CD8-positive, alpha-beta T cell (primary cell): ENCODE measurements at regions of chr10 and their contacts with region 1.

Region 1: DNA sequence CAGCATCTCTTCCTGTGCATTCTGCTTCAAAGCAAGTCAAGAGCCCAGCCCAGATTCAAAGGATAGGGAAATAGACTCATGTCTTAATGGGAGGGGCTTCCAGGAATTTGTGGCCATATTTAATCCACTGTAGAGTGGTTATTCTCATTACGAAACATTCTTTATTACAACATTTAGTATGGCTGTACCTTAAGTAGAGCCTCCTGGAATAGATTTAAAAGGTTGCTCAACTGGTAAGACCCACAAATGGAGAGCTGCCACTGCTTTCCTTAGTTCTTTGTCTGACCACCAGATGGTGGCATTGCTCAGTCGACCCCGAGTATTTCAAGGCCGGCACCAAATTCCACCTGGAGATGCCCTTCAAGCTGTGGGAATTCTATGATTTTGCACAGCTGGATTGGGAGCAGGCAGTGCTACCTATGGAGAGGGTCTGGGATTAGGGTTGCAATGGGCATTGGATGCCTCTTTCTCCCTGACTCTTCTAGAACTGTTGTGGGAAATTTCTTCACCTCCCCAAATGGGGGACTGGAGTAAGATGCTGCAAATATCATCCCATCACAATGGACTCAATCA is 102.2 kb downstream of the RBM20 start:
- DNase-seq: peak; percentile 22 to 75 (median 46)
- ATAC-seq: peak; percentile 37
- H3K4me3 ChIP-seq: no peak overlapping the region
- H3K4me3 Mint-ChIP-seq: no peak overlapping the region
- H3K27ac ChIP-seq: no peak overlapping the region
- H3K27ac Mint-ChIP-seq: no peak overlapping the region
- H3K4me1 ChIP-seq: peaks cover 22% of the 10 kb centered on the region
- H3K4me1 Mint-ChIP-seq: peaks cover 52% of the 10 kb centered on the region
- H3K27me3 ChIP-seq: no peaks in the 10 kb centered on the region
- H3K27me3 Mint-ChIP-seq: no peaks in the 10 kb centered on the region
- CTCF ChIP-seq: peak; percentile 89

Region 2: GRCh38 chr10:110671788-110672579 is 74.4 kb before region 1 on chr10:
- CTCF ChIA-PET with region 1: interaction called, 3 read pairs
- POLR2A ChIA-PET with region 1: no interaction called
- intact Hi-C with region 1: loop called in 1 of 2 experiments (anchors 2 kb)
- DNase-seq: peak; percentile 36 to 82 (median 69)
- ATAC-seq: peak; percentile 85
- H3K4me3 ChIP-seq: peak overlapping the region; percentile 66 to 76
- H3K4me3 Mint-ChIP-seq: peak overlapping the region; percentile 91
- H3K27ac ChIP-seq: peak overlapping the region; percentile 55 to 69
- H3K27ac Mint-ChIP-seq: peak overlapping the region; percentile 91
- H3K4me1 ChIP-seq: peaks cover 4% of the 10 kb centered on the region
- H3K4me1 Mint-ChIP-seq: peaks cover 4% of the 10 kb centered on the region
- H3K27me3 ChIP-seq: no peaks in the 10 kb centered on the region
- H3K27me3 Mint-ChIP-seq: no peaks in the 10 kb centered on the region
- CTCF ChIP-seq: peak; percentile 58

Region 3: GRCh38 chr10:110724116-110724921 is 22.0 kb before region 1 on chr10:
- CTCF ChIA-PET with region 1: no interaction called
- POLR2A ChIA-PET with region 1: no interaction called
- intact Hi-C with region 1: no loop called
- DNase-seq: peak in 1 of 9 experiments; percentile 21
- ATAC-seq: peak; percentile 42
- H3K4me3 ChIP-seq: peak overlapping the region in 1 of 2 experiments; percentile 28
- H3K4me3 Mint-ChIP-seq: peak overlapping the region; percentile 70
- H3K27ac ChIP-seq: no peak overlapping the region
- H3K27ac Mint-ChIP-seq: peak overlapping the region; percentile 83
- H3K4me1 ChIP-seq: peaks cover 25% of the 10 kb centered on the region
- H3K4me1 Mint-ChIP-seq: peaks cover 32% of the 10 kb centered on the region
- H3K27me3 ChIP-seq: no peaks in the 10 kb centered on the region
- H3K27me3 Mint-ChIP-seq: no peaks in the 10 kb centered on the region
- CTCF ChIP-seq: no peak

Region 4: DNA sequence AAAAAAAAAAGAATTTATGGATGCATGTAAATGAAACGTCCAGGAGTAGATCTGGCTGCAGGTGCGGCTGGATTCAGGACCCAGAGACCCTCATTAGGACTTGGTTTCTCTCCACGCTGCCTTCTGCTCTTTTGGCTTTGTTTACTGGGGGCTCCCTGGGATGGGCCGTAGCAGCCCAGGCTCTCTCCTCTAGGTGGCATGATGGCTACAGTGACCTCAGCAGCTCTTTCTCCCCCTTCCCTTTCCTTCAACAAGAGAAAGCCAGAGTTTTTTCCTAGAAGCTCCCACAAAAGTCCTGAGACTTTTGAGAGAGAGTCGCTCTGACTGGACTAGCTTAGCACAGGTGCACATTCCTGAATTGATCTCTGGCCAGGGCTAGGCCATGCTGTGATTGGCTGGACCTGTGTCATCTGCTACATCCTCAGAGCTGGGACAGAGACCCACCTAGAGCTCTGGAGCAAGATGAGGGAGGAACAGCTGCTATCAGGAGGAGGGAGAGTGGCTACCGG is 57.5 kb after region 1 on chr10:
- CTCF ChIA-PET with region 1: interaction called, 11 read pairs
- POLR2A ChIA-PET with region 1: no interaction called
- intact Hi-C with region 1: loop called (anchors 1 to 5 kb)
- DNase-seq: peak in 7 of 9 experiments; percentile 22 to 79 (median 54)
- ATAC-seq: peak; percentile 51
- H3K4me3 ChIP-seq: no peak overlapping the region
- H3K4me3 Mint-ChIP-seq: peak overlapping the region; percentile 59
- H3K27ac ChIP-seq: peak overlapping the region in 1 of 2 experiments; percentile 44
- H3K27ac Mint-ChIP-seq: peak overlapping the region; percentile 89
- H3K4me1 ChIP-seq: peaks cover 32% of the 10 kb centered on the region
- H3K4me1 Mint-ChIP-seq: peaks cover 40% of the 10 kb centered on the region
- H3K27me3 ChIP-seq: no peaks in the 10 kb centered on the region
- H3K27me3 Mint-ChIP-seq: no peaks in the 10 kb centered on the region
- CTCF ChIP-seq: peak; percentile 58

Region 5: DNA sequence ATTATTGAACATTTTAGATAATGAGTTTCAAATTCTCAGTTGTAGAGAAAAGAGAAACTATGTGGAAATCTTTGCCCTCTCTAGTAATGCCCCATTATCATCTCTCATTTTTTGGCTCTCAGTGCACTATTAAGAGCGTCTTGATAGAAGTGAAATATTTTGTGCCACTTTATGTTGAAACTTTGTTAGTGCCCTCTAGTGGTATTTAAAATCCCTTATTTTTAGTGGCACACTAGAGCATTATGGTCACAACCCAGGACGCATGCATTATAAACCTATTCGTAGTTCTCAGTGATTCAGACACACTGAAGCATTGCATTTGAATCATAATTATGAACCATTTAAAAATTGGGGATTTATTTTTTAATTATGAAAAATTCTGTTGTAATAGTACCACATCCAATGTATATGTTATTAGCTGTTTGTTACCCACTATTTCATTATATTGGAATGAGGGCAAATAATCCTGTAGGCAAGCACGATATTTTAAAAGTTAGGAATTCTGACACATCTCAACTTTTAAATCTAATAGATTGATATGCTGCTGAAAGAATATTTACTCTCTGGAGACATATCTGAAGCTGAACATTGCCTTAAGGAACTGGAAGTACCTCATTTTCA is 147.3 kb after region 1 on chr10:
- CTCF ChIA-PET with region 1: interaction called, 18 read pairs
- POLR2A ChIA-PET with region 1: interaction called, 3 read pairs
- intact Hi-C with region 1: loop called (anchors 1 kb)
- DNase-seq: peak in 2 of 9 experiments; percentile 63 to 76
- ATAC-seq: peak; percentile 65
- H3K4me3 ChIP-seq: no peak overlapping the region
- H3K4me3 Mint-ChIP-seq: no peak overlapping the region
- H3K27ac ChIP-seq: no peak overlapping the region
- H3K27ac Mint-ChIP-seq: peak overlapping the region; percentile 47
- H3K4me1 ChIP-seq: peaks cover 9% of the 10 kb centered on the region
- H3K4me1 Mint-ChIP-seq: peaks cover 61% of the 10 kb centered on the region
- H3K27me3 ChIP-seq: no peaks in the 10 kb centered on the region
- H3K27me3 Mint-ChIP-seq: no peaks in the 10 kb centered on the region
- CTCF ChIP-seq: peak; percentile 45

Region 6: DNA sequence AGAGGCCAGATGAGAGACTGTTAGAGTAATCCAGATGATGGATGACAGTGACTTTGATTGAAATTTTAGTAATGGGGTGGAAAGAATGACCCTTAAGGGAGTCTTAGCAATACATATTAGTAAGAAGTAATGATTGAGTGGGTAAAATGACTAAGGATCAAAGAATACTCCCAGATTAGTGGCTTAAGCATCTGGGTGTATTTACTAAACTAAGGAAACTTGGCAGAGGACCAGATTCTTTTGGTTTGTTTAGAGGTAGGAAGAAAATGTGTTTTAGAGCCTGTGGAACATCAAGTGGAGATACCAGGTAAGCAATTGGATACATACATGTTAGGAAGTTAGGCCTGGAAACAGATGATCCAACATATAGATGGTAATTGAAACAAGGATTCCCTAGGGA is 271.7 kb after region 1 on chr10:
- CTCF ChIA-PET with region 1: no interaction called
- POLR2A ChIA-PET with region 1: no interaction called
- intact Hi-C with region 1: loop called in 1 of 2 experiments (anchors 5 kb)
- DNase-seq: no peak
- ATAC-seq: no peak
- H3K4me3 ChIP-seq: no peak overlapping the region
- H3K4me3 Mint-ChIP-seq: no peak overlapping the region
- H3K27ac ChIP-seq: no peak overlapping the region
- H3K27ac Mint-ChIP-seq: no peak overlapping the region
- H3K4me1 ChIP-seq: no peaks in the 10 kb centered on the region
- H3K4me1 Mint-ChIP-seq: peaks cover 6% of the 10 kb centered on the region
- H3K27me3 ChIP-seq: no peaks in the 10 kb centered on the region
- H3K27me3 Mint-ChIP-seq: no peaks in the 10 kb centered on the region
- CTCF ChIP-seq: no peak

Region 7: DNA sequence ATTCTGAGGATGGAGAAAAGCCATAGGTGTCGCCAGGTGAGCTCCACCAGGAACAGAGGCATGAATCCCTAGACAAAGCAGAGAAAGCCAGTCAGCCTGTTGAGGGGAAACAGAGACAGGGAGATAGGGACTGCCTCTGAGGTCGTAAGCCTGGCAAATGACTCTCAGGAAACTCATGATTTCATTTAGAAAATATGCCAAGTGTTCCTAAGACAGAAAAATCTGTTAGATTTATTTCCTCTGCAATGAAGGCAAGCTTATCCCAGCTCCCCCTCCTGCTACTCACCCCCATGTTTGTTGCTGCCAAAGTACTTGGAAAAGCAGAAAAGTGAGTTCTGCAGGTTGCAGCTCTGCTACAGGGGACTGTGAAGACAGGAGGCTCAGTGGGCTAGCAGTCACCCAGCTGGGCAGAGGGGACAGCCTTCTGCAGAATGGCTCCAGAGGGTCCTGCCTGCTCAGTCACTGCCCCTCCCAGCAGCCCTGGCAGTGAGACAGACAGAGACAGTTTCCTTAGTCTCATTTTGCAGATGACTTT is 514.8 kb after region 1 on chr10:
- CTCF ChIA-PET with region 1: no interaction called
- POLR2A ChIA-PET with region 1: no interaction called
- intact Hi-C with region 1: loop called in 1 of 2 experiments (anchors 10 kb)
- DNase-seq: no peak
- ATAC-seq: no peak
- H3K4me3 ChIP-seq: no peak overlapping the region
- H3K4me3 Mint-ChIP-seq: no peak overlapping the region
- H3K27ac ChIP-seq: no peak overlapping the region
- H3K27ac Mint-ChIP-seq: no peak overlapping the region
- H3K4me1 ChIP-seq: no peaks in the 10 kb centered on the region
- H3K4me1 Mint-ChIP-seq: no peaks in the 10 kb centered on the region
- H3K27me3 ChIP-seq: no peaks in the 10 kb centered on the region
- H3K27me3 Mint-ChIP-seq: peaks cover 19% of the 10 kb centered on the region
- CTCF ChIP-seq: no peak

Region 8: GRCh38 chr10:111551001-111551400 is 804.7 kb after region 1 on chr10:
- CTCF ChIA-PET with region 1: no interaction called
- POLR2A ChIA-PET with region 1: no interaction called
- intact Hi-C with region 1: no loop called
- DNase-seq: no peak
- ATAC-seq: no peak
- H3K4me3 ChIP-seq: no peak overlapping the region
- H3K4me3 Mint-ChIP-seq: no peak overlapping the region
- H3K27ac ChIP-seq: no peak overlapping the region
- H3K27ac Mint-ChIP-seq: no peak overlapping the region
- H3K4me1 ChIP-seq: no peaks in the 10 kb centered on the region
- H3K4me1 Mint-ChIP-seq: no peaks in the 10 kb centered on the region
- H3K27me3 ChIP-seq: peaks cover 0 to 3% of the 10 kb centered on the region in 2 experiments
- H3K27me3 Mint-ChIP-seq: no peaks in the 10 kb centered on the region
- CTCF ChIP-seq: no peak

Region 9: GRCh38 chr10:112137154-112137987 is 1391.0 kb after region 1 on chr10:
- CTCF ChIA-PET with region 1: no interaction called
- POLR2A ChIA-PET with region 1: no interaction called
- intact Hi-C with region 1: loop called in 1 of 2 experiments (anchors 5 kb)
- DNase-seq: peak; percentile 17 to 68 (median 55)
- ATAC-seq: peak; percentile 45
- H3K4me3 ChIP-seq: no peak overlapping the region
- H3K4me3 Mint-ChIP-seq: no peak overlapping the region
- H3K27ac ChIP-seq: no peak overlapping the region
- H3K27ac Mint-ChIP-seq: no peak overlapping the region
- H3K4me1 ChIP-seq: no peaks in the 10 kb centered on the region
- H3K4me1 Mint-ChIP-seq: no peaks in the 10 kb centered on the region
- H3K27me3 ChIP-seq: no peaks in the 10 kb centered on the region
- H3K27me3 Mint-ChIP-seq: peaks cover 6% of the 10 kb centered on the region
- CTCF ChIP-seq: peak; percentile 83